HEK293T (cell line): ENCODE measurements at regions of chr3 and their contacts with region 1.

Region 1: GRCh38 chr3:15443826-15444524 is 16.6 kb downstream of the EAF1 start:
- DNase-seq: no peak

Region 2: GRCh38 chr3:15427182-15427880 is 16.6 kb before region 1 on chr3 and contains the starts of genes EAF1 and METTL6:
- CTCF ChIA-PET with region 1: interaction called, 10 read pairs
- POLR2A ChIA-PET with region 1: no interaction called
- DNase-seq: peak; percentile 91

Region 3: GRCh38 chr3:15476378-15476777 is 32.4 kb after region 1 on chr3:
- CTCF ChIA-PET with region 1: no interaction called
- POLR2A ChIA-PET with region 1: no interaction called
- DNase-seq: no peak